Posterior vena cava (tissue), 2 donors: ENCODE measurements at regions of chr2 and their contacts with region 1.

Region 1: DNA sequence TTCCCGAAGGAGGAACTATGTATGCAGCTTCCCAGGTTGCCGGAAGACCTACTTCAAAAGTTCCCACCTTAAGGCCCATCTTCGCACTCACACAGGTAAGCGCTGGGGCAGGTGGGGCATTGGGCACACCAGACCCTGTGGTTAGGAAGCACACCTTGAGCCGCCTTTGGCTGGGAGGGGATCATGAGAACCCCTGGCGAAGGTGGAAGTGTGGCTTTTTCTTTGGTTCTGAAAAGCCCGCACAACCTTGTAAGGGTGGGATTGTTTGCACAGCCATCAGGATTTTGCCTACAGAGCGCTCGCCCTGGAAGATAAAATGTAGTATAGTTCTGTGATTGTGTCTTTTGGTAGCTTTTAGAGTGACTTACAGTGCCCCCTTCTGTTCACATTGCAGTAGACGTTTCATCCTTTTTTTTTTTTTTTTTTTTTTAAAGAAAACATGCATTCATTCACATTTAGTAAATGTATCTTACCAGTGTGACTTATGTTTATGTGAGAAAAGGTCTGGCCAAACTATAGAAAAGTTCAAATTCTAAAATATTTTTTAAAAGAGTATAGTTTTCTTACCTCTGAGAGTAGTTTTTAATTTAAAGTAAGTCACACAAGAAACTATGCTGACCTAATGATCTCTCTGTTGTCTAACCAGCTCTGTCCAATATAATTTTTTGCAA is 5.3 kb downstream of the KLF11 start:
- DNase-seq: peak; percentile 53

Region 2: GRCh38 chr2:8441986-8442385 is 1606.7 kb before region 1 on chr2:
- intact Hi-C with region 1: no loop called
- DNase-seq: no peak

Region 3: DNA sequence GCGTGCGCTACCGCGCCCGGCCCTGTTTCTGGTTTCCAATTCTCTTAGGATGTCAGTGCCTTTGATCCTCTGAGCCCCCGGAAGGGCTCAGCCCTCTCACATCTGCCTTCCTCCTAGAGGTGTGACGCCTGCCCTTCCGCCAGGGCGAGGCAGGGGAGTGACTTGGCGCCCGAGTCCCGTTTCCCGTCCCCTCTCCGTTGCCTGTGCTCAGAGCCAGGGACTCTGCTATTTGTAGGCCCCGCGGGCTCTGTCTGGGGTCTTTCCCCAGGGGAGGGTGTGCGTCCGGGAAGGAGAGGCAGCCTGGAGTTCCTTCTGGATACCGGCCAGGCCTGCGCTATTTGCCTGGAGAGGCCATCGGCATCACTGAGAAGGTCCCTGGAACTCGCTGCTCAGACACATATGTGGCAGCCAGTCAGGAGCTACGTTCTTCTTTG is 309.1 kb before region 1 on chr2:
- intact Hi-C with region 1: no loop called
- DNase-seq: peak; percentile 92

Region 4: GRCh38 chr2:9813312-9814133 is 235.1 kb before region 1 on chr2:
- intact Hi-C with region 1: loop called in 1 of 2 experiments (anchors 2 kb)
- DNase-seq: peak; percentile 92

Region 5: DNA sequence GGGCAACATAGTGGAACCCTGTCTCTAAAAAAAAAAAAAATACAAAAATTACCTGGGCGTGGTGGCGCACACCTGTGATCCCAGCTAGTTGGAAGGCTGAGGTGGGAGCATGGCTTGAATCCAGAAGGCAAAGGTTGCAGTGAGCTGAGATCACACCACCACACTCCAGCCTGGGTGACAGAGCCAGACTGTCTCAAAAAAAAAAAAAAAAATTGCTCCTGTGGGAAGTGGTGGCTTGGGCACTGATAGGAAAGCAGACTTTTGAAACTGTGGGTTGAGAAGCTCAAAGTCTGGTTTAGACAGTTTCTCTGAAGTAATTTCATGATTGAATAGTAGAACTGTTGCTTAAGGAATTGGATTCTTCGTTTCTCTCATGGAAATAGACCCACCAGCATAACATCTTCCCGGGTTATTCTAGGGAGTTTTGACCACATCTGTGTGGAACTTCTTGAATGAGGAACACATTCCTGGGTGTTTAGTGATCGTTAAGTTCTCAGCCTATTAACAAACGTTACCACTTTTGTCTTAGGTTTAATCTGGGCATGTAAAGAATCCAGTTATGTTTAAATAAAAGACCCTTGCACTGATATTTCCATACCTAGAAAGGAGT is 63.7 kb before region 1 on chr2:
- intact Hi-C with region 1: loop called (anchors 5 kb)
- DNase-seq: no peak

Region 6: GRCh38 chr2:10091182-10091888 is 42.7 kb after region 1 on chr2:
- intact Hi-C with region 1: no loop called
- DNase-seq: peak; percentile 78